HCT116 (cell line): ENCODE measurements at regions of chr19 and their contacts with region 1.

Region 1: DNA sequence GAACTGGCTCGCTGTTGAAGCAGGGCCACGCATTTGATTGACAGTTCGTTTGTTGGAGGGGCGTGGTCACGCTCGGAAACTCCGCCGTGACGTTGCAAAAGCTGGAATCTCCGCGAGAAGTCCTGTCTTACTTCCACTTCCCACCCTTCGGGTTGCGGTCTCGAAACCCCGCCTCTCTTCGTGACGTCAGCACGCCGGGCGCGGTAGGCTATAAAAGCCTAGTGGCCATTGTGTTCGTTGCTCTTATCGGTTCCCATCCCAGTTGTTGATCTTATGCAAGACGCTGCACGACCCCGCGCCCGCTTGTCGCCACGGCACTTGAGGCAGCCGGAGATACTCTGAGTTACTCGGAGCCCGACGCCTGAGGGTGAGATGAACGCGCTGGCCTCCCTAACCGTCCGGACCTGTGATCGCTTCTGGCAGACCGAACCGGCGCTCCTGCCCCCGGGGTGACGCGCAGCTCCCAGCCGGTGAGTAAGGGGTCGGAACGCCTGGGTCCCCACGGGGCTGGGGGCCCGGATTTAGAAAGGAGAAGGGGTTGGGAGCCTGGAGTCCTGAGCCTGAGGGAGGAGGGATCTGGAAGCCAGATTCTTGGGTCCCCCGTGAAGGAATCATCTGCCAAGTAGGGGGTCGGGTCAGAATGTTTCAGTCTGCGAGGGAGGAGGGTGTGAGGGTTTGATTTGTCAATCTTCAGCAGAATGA is at the start of gene PPP1R15A:
- DNase-seq: peak; percentile 96
- ATAC-seq: peak; percentile 73
- H3K4me3 ChIP-seq: peak within 1 kb of the TSS; percentile 93 to 100
- H3K27ac ChIP-seq: peak within 1 kb of the TSS; percentile 90
- H3K4me1 ChIP-seq: peaks cover 57 to 70% of the 10 kb centered on the region in 2 experiments
- H3K27me3 ChIP-seq: no peaks in the 10 kb centered on the region
- CTCF ChIP-seq: no peak
- POLR2A ChIP-seq: peak; percentile 99
- RAD21 ChIP-seq: no peak
- total RNA-seq, gene PPP1R15A: 50.3 TPM

Region 2: DNA sequence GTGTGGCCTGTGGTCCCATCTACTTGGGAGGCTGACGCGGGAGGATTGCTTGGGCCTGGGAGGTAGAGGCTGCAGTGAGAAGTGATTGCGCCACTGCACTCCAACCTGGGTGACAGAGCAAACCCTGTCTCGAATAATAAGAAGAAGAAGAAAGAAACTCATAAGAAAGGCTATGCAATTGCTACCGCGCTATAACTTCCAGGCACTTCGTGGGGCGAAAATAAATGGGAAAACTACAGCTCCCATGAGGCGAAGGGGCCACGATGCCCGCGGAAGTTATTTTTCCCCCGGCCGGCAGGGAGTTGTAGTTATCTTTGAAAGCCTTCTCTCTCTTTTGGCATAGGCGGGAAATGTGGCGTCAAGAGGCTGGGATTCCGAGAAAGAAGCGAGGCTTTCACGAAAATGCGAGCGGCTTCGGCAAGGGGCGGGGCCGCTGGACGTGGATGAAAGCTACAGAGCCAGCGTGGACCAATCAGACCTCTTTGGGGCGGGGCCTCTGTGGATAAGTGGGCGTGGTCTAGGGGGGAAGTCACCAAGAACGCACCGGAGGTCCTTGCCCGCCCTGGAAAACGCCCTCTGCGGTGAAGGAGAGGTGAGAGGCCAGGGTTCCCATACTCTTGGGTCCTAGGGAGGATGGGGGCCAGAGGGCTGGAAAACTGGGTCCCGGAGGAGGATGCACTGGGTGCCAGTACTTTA is 27.6 kb after region 1 on chr19 and contains the start of gene NUCB1:
- CTCF ChIA-PET with region 1: no interaction called
- POLR2A ChIA-PET with region 1: interaction called, 16 read pairs
- RAD21 ChIA-PET with region 1: no interaction called
- intact Hi-C with region 1: no loop called
- DNase-seq: peak; percentile 96
- ATAC-seq: peak; percentile 97
- H3K4me3 ChIP-seq: peak within 1 kb of the TSS; percentile 95
- H3K27ac ChIP-seq: peak within 1 kb of the TSS; percentile 48
- H3K4me1 ChIP-seq: peaks cover 3 to 26% of the 10 kb centered on the region in 2 experiments; a peak in 3 of 4 replicates
- H3K27me3 ChIP-seq: no peaks in the 10 kb centered on the region
- CTCF ChIP-seq: 0 out of 6 replicates have a peak, but pooled peaks of 1 of the 3 experiments have one; percentile 18
- POLR2A ChIP-seq: no peak
- RAD21 ChIP-seq: no peak; the same call in 1 of the 2 replicates
- total RNA-seq, gene NUCB1: 88.8 TPM

Region 3: DNA sequence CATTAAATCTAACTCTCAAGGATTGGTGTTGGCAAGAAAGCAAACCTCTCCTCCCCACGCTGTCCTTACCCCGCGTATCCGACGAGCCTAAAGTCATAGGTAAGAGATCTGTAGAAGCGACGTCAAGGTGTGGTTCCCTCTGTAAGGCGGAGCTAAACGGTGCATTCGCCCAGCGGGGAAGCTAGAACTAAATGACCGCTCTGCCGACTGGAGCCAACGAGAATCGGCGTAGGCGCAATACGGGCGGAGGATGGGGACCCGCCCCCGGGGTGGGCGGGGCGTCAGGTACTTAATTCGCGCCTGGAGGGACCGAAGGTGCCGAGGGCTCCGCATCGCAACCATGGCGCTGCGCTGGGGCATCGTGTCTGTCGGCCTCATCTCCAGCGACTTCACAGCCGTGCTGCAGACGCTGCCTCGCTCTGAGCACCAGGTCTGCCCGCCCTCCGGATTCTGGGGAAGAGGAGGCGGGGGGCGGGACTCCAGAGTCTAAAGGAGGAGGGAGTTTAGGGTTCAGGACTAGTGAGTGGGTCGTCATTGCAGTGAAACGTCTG is 61.1 kb after region 1 on chr19 and contains the start of gene DHDH:
- CTCF ChIA-PET with region 1: no interaction called
- POLR2A ChIA-PET with region 1: interaction called, 12 read pairs
- RAD21 ChIA-PET with region 1: no interaction called
- intact Hi-C with region 1: no loop called
- DNase-seq: peak; percentile 92
- ATAC-seq: peak; percentile 99
- H3K4me3 ChIP-seq: peak within 1 kb of the TSS; percentile 47 to 73
- H3K27ac ChIP-seq: peak within 1 kb of the TSS; percentile 28; the same call in 1 of the 2 replicates
- H3K4me1 ChIP-seq: peaks cover 12 to 20% of the 10 kb centered on the region in 2 experiments
- H3K27me3 ChIP-seq: no peaks in the 10 kb centered on the region
- CTCF ChIP-seq: no peak
- POLR2A ChIP-seq: peak; percentile 85
- RAD21 ChIP-seq: no peak
- total RNA-seq, gene DHDH: 8.6 TPM

Region 4: GRCh38 chr19:48946463-48947257 is 74.3 kb after region 1 on chr19:
- CTCF ChIA-PET with region 1: no interaction called
- POLR2A ChIA-PET with region 1: no interaction called
- RAD21 ChIA-PET with region 1: no interaction called
- intact Hi-C with region 1: no loop called
- DNase-seq: no peak
- ATAC-seq: no peak
- H3K4me3 ChIP-seq: no peak overlapping the region
- H3K27ac ChIP-seq: no peak overlapping the region
- H3K4me1 ChIP-seq: no peaks in the 10 kb centered on the region
- H3K27me3 ChIP-seq: no peaks in the 10 kb centered on the region
- CTCF ChIP-seq: no peak
- POLR2A ChIP-seq: no peak
- RAD21 ChIP-seq: no peak

Region 5: DNA sequence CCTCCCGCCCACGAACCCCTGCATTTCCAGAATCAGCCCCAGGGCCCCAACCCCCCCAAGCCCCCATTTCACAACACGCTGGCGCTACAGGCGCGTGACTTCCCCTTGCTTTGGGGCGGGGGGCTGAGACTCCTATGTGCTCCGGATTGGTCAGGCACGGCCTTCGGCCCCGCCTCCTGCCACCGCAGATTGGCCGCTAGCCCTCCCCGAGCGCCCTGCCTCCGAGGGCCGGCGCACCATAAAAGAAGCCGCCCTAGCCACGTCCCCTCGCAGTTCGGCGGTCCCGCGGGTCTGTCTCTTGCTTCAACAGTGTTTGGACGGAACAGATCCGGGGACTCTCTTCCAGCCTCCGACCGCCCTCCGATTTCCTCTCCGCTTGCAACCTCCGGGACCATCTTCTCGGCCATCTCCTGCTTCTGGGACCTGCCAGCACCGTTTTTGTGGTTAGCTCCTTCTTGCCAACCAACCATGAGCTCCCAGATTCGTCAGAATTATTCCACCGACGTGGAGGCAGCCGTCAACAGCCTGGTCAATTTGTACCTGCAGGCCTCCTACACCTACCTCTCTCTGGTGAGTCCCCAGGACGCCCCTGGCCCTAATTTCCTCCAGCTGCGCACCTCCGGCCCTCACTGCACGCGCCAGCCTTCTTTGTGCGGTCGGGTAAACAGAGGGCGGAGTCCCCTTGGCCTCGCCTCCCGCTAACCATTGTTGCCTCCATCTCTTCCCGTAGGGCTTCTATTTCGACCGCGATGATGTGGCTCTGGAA is 92.9 kb after region 1 on chr19 and contains the start of gene FTL:
- CTCF ChIA-PET with region 1: interaction called, 8 read pairs
- POLR2A ChIA-PET with region 1: interaction called, 12 read pairs
- RAD21 ChIA-PET with region 1: no interaction called
- intact Hi-C with region 1: loop called (anchors 5 kb)
- DNase-seq: peak; percentile 83
- ATAC-seq: peak; percentile 74
- H3K4me3 ChIP-seq: peak within 1 kb of the TSS; percentile 73 to 84
- H3K27ac ChIP-seq: peak within 1 kb of the TSS; percentile 98
- H3K4me1 ChIP-seq: peaks cover 35 to 62% of the 10 kb centered on the region in 2 experiments
- H3K27me3 ChIP-seq: no peaks in the 10 kb centered on the region
- CTCF ChIP-seq: no peak
- POLR2A ChIP-seq: peak; percentile 99
- RAD21 ChIP-seq: no peak
- total RNA-seq, gene FTL: 1,885 TPM